ENCODE measurements at regions of chr2 and their contacts with region 1.

Region 1: GRCh38 chr2:189661148-189661956 is at the start of gene ASNSD1:
- DNase-seq: peak; percentile 99
- H3K4me3 ChIP-seq: peak within 1 kb of the TSS; percentile 67
- H3K4me3 Mint-ChIP-seq: no peak within 1 kb of the TSS
- H3K27ac Mint-ChIP-seq: no peak within 1 kb of the TSS
- H3K4me1 ChIP-seq: peaks cover 22% of the 10 kb centered on the region
- H3K4me1 Mint-ChIP-seq: no peaks in the 10 kb centered on the region
- H3K27me3 ChIP-seq: no peaks in the 10 kb centered on the region
- H3K27me3 Mint-ChIP-seq: no peaks in the 10 kb centered on the region
- CTCF ChIP-seq: peak; percentile 93 to 96
- total RNA-seq, gene ASNSD1: 39.2 and 49.4 TPM in 2 replicates

Region 2: GRCh38 chr2:189580658-189581353 is 80.5 kb before region 1 on chr2 and contains the start of gene SLC40A1:
- CTCF ChIA-PET with region 1: interaction called, 4 read pairs
- POLR2A ChIA-PET with region 1: interaction called, 3 read pairs
- intact Hi-C with region 1: loop called (anchors 1 kb)
- DNase-seq: peak; percentile 89 to 96
- H3K4me3 ChIP-seq: peak within 1 kb of the TSS; percentile 66
- H3K4me3 Mint-ChIP-seq: peak within 1 kb of the TSS; percentile 99
- H3K27ac Mint-ChIP-seq: peak within 1 kb of the TSS; percentile 88
- H3K4me1 ChIP-seq: peaks cover 51% of the 10 kb centered on the region
- H3K4me1 Mint-ChIP-seq: peaks cover 48% of the 10 kb centered on the region
- H3K27me3 ChIP-seq: no peaks in the 10 kb centered on the region
- H3K27me3 Mint-ChIP-seq: no peaks in the 10 kb centered on the region
- CTCF ChIP-seq: no peak
- total RNA-seq, gene SLC40A1: 78.1 and 109 TPM in 2 replicates

Region 3: GRCh38 chr2:189698020-189698887 is 36.9 kb after region 1 on chr2:
- CTCF ChIA-PET with region 1: interaction called, 3 read pairs
- POLR2A ChIA-PET with region 1: no interaction called
- intact Hi-C with region 1: loop called (anchors 1 kb)
- DNase-seq: peak in 1 of 2 experiments; percentile 37
- H3K4me3 ChIP-seq: no peak overlapping the region
- H3K4me3 Mint-ChIP-seq: no peak overlapping the region
- H3K27ac Mint-ChIP-seq: no peak overlapping the region
- H3K4me1 ChIP-seq: no peaks in the 10 kb centered on the region
- H3K4me1 Mint-ChIP-seq: no peaks in the 10 kb centered on the region
- H3K27me3 ChIP-seq: no peaks in the 10 kb centered on the region
- H3K27me3 Mint-ChIP-seq: no peaks in the 10 kb centered on the region
- CTCF ChIP-seq: peak; percentile 48 to 69

Region 4: GRCh38 chr2:189762551-189763298 is 101.4 kb after region 1 on chr2 and contains the start of gene OSGEPL1:
- CTCF ChIA-PET with region 1: interaction called, 13 read pairs
- POLR2A ChIA-PET with region 1: no interaction called
- intact Hi-C with region 1: loop called (anchors 1 kb)
- DNase-seq: peak; percentile 95 to 97
- H3K4me3 ChIP-seq: peak within 1 kb of the TSS; percentile 48
- H3K4me3 Mint-ChIP-seq: peak within 1 kb of the TSS; percentile 98
- H3K27ac Mint-ChIP-seq: peak within 1 kb of the TSS; percentile 87
- H3K4me1 ChIP-seq: peaks cover 8% of the 10 kb centered on the region; the same call in 1 of the 2 replicates
- H3K4me1 Mint-ChIP-seq: no peaks in the 10 kb centered on the region
- H3K27me3 ChIP-seq: no peaks in the 10 kb centered on the region
- H3K27me3 Mint-ChIP-seq: no peaks in the 10 kb centered on the region
- CTCF ChIP-seq: peak; percentile 47 to 74
- total RNA-seq, gene OSGEPL1: 5.0 and 5.3 TPM in 2 replicates

Region 5: GRCh38 chr2:190069936-190070696 is 408.8 kb after region 1 on chr2:
- CTCF ChIA-PET with region 1: no interaction called
- POLR2A ChIA-PET with region 1: no interaction called
- intact Hi-C with region 1: loop called (anchors 1 kb)
- DNase-seq: peak in 1 of 2 experiments; percentile 60
- H3K4me3 ChIP-seq: no peak overlapping the region
- H3K4me3 Mint-ChIP-seq: no peak overlapping the region
- H3K27ac Mint-ChIP-seq: no peak overlapping the region
- H3K4me1 ChIP-seq: no peaks in the 10 kb centered on the region
- H3K4me1 Mint-ChIP-seq: no peaks in the 10 kb centered on the region
- H3K27me3 ChIP-seq: no peaks in the 10 kb centered on the region
- H3K27me3 Mint-ChIP-seq: peaks cover 4% of the 10 kb centered on the region
- CTCF ChIP-seq: peak; percentile 63 to 78

Measured in Caco-2 (cell line).